ENCODE measurements at regions of chr10 and their contacts with region 1.

Region 1: GRCh38 chr10:86899670-86900276 is 57.6 kb downstream of the MMRN2 start:
- DNase-seq: peak; percentile 42
- ATAC-seq: peak; percentile 88
- H3K4me3 ChIP-seq: no peak overlapping the region
- H3K27ac ChIP-seq: no peak overlapping the region
- H3K4me1 ChIP-seq: no peaks in the 10 kb centered on the region
- H3K27me3 ChIP-seq: no peaks in the 10 kb centered on the region
- CTCF ChIP-seq: peak; percentile 88

Region 2: DNA sequence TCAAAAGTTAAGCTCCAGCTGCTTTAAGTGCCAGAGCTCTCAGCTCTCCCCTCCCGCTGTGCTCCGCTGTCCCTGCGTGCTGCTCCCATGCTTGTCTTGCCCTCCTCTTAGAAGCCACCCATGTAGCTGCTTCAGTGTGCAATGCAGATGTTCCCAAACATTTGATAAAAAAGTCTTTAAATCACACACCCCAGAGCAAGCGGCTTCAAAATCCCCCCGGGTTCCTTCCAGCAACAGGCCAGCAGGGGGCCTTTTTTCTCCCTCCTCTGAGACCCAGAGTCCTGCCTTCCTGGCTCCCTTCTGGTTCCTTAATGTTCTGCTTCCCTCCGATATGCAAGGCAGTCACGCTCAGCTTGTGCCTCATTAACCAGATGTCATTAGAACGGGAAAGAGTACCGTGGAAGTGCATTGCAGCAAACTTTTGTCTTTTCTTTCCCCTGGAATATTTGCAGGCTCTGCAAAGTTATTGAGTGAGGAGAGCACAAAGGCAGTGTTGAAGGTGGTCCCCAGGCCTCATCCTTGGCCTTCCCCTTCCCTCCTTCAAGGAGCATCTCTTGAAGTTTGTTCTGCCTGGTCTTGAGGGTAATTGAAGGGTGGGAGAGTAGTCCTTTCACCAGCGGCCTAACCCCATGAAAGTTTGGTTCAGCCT is 205.9 kb before region 1 on chr10:
- CTCF ChIA-PET with region 1: no interaction called
- POLR2A ChIA-PET with region 1: no interaction called
- in situ Hi-C with region 1: no loop called
- intact Hi-C with region 1: loop called (anchors 5 kb)
- DNase-seq: no peak
- ATAC-seq: peak; percentile 54; the same call in 1 of the 2 replicates
- H3K4me3 ChIP-seq: no peak overlapping the region
- H3K27ac ChIP-seq: no peak overlapping the region
- H3K4me1 ChIP-seq: peaks cover 5% of the 10 kb centered on the region
- H3K27me3 ChIP-seq: no peaks in the 10 kb centered on the region
- CTCF ChIP-seq: peak; percentile 90

Region 3: GRCh38 chr10:86710987-86711512 is 188.7 kb before region 1 on chr10:
- CTCF ChIA-PET with region 1: no interaction called
- POLR2A ChIA-PET with region 1: no interaction called
- in situ Hi-C with region 1: no loop called
- intact Hi-C with region 1: loop called (anchors 2 kb)
- DNase-seq: no peak
- ATAC-seq: peak; percentile 94
- H3K4me3 ChIP-seq: peak overlapping the region; percentile 59 to 69
- H3K27ac ChIP-seq: peak overlapping the region; percentile 99
- H3K4me1 ChIP-seq: peaks cover 18% of the 10 kb centered on the region
- H3K27me3 ChIP-seq: no peaks in the 10 kb centered on the region
- CTCF ChIP-seq: peak; percentile 98

Region 4: DNA sequence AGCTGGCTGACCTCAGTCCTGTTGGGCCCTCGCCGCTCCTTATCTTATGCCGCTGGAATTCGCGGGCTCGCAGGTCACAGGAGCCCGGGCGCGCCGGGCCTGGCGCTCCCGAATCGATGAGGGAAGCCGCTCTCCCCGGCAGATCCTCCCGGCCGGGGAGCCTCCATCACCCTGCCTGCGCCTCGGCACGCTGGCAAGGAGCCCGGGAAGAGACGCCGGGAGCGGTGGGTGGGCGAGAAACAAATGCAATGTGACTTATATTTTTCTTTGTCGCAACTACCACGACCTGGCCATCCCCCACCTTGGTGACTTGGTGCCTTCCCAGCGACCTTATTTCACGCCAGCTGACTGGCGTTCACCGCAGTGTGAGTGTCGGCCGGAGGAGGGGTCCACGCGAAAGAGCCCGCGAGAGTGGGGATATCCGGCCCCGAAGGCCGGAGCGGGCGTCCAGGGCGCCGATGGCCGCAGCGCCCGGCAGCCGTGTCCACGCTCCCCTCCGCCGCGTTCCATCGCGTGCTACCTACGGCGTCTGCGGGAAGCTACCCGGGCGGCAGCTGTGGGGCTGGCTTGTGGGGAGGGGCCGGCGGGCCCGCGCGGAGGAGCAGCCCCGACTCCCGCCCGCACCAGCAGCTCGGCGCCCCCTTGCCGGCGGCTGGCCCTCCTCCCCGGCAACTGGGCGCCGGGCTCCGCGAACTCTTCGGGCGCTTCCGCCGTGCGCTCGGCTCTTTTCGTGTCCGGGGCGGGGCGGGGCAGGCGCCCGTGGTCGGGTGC is 143.8 kb before region 1 on chr10:
- CTCF ChIA-PET with region 1: no interaction called
- POLR2A ChIA-PET with region 1: no interaction called
- in situ Hi-C with region 1: no loop called
- intact Hi-C with region 1: loop called (anchors 5 kb)
- DNase-seq: no peak
- ATAC-seq: peak; percentile 92
- H3K4me3 ChIP-seq: peak overlapping the region; percentile 71 to 82
- H3K27ac ChIP-seq: peak overlapping the region; percentile 94
- H3K4me1 ChIP-seq: peaks cover 21% of the 10 kb centered on the region
- H3K27me3 ChIP-seq: no peaks in the 10 kb centered on the region
- CTCF ChIP-seq: no peak